ENCODE measurements at regions of chr1 and their contacts with region 1.

Region 1: DNA sequence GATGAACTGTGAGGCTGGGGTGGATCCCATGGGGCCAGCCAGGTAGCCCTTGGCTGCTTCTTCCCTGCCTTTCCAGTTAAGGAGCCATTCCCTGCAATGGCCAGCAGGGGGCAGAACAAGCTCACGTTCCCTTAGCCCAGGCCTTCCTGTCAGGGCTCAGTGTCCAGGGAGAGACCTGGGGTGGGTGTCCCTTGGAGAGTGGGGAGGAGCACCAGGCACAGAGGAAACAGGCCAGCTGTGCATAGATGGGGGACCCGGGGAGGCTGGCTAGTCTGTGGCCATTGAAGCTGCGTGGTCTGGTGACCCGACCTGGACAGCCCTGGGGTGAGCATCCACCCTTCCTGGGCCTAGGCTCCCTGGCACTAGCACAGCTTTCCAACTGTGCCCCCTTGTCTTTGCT is 13.2 kb upstream of the EPS8L3 start:
- DNase-seq: peak; percentile 77

Region 2: DNA sequence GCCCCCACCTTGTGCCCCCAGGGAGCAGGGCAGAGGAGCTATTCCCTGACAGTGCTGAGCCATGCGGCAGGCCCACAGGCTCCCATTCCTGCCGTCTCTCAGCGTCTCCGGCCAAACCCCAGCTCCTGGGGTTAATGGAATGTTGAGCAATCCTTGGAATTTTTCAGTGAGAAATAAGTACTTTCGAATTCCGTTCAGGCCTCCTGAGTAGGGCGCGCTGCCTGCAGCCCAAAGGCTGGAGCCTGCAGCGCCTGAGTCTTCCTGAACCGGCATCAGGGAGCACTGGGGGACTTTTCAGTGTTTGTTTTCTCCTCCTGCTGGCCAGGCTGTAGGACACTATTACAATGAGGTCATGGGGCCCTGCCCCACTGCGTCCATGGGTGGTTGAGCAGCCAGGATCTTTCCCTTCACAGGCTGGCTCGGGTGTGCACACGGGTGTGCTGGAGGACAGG is 100.4 kb after region 1 on chr1:
- in situ Hi-C with region 1: loop called (anchors 25 kb)
- DNase-seq: peak; percentile 87

Region 3: GRCh38 chr1:109984456-109985275 is 207.8 kb after region 1 on chr1 and contains the start of gene AHCYL1:
- in situ Hi-C with region 1: loop called (anchors 25 kb)
- DNase-seq: peak; percentile 97

Measured in ACHN (cell line).